ENCODE measurements at regions of chr16 and their contacts with region 1.

Region 1: GRCh38 chr16:35188288-35189155 is 1729.1 kb downstream of the TP53TG3F start:
- DNase-seq: no peak
- H3K4me3 ChIP-seq: no peak overlapping the region
- H3K27ac ChIP-seq: no peak overlapping the region
- H3K27me3 ChIP-seq: peaks cover 0 to 50% (median 12%) of the 10 kb centered on the region in 45 donors
- CTCF ChIP-seq: peak in 32 of 56 donors; percentile 8 to 49 (median 24)

Region 2: GRCh38 chr16:35221482-35222185 is 33.1 kb after region 1 on chr16:
- intact Hi-C with region 1: no loop called
- DNase-seq: no peak
- H3K4me3 ChIP-seq: no peak overlapping the region
- H3K27ac ChIP-seq: no peak overlapping the region
- H3K27me3 ChIP-seq: peaks cover 0 to 8% (median 0%) of the 10 kb centered on the region in 45 donors
- CTCF ChIP-seq: no peak

Region 3: DNA sequence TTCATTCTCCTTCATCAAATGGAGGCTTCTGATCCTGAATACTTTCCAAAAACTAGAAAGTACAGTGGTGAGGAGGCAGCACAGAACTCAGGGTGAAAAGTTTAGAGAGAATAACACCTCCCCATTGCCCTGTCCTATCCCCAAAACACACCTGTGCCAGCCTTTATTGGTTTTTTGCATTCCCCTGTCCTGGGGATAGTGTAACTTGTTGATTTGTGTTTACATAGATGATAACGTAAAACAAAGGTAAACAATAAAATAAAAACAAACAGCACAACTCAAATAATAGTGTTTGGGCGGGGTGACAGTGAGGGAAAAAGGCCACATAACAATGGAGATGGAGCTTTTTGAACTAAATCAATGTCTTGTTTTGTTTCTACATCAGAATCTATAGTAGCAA is 188.6 kb after region 1 on chr16:
- intact Hi-C with region 1: loop called in 1 of 2 experiments (anchors 5 kb)
- DNase-seq: no peak
- H3K4me3 ChIP-seq: no peak overlapping the region
- H3K27ac ChIP-seq: no peak overlapping the region
- H3K27me3 ChIP-seq: peaks cover 0 to 17% (median 0%) of the 10 kb centered on the region in 45 donors
- CTCF ChIP-seq: no peak

Measured in dorsolateral prefrontal cortex (tissue), 120 donors.